HEK293 (cell line): ENCODE measurements at regions of chr5 and their contacts with region 1.

Region 1: GRCh38 chr5:67209142-67209771 is 12.7 kb upstream of the CD180 start:
- H3K4me3 ChIP-seq: no peak overlapping the region
- H3K27ac ChIP-seq: no peak overlapping the region
- H3K4me1 ChIP-seq: no peaks in the 10 kb centered on the region
- CTCF ChIP-seq: peak; percentile 89

Region 2: DNA sequence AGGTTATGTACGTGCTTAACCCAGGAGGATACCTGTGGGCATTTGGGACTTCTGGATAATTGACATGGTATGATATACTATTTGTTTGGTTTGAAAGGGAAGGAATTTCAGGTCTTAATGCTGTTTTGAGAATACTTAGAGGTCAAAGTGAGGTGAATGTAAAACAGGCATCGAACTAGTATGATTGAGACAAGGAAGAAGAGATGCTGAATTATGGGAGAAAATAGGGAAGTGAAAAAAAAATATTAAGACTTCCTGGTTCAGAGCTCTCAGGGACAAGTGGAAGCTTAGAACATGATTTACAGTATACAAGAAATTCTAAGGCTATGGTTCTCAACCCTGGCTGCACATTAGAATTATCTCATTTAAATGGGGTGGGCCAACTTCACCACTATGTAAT is 128.0 kb before region 1 on chr5:
- CTCF ChIA-PET with region 1: no interaction called
- POLR2A ChIA-PET with region 1: no interaction called
- H3K4me3 ChIP-seq: no peak overlapping the region
- H3K27ac ChIP-seq: no peak overlapping the region
- H3K4me1 ChIP-seq: no peaks in the 10 kb centered on the region
- CTCF ChIP-seq: no peak

Region 3: GRCh38 chr5:67156976-67157583 is 52.2 kb before region 1 on chr5:
- CTCF ChIA-PET with region 1: interaction called, 19 read pairs
- POLR2A ChIA-PET with region 1: no interaction called
- H3K4me3 ChIP-seq: no peak overlapping the region
- H3K27ac ChIP-seq: no peak overlapping the region
- H3K4me1 ChIP-seq: no peaks in the 10 kb centered on the region
- CTCF ChIP-seq: peak; percentile 68

Region 4: DNA sequence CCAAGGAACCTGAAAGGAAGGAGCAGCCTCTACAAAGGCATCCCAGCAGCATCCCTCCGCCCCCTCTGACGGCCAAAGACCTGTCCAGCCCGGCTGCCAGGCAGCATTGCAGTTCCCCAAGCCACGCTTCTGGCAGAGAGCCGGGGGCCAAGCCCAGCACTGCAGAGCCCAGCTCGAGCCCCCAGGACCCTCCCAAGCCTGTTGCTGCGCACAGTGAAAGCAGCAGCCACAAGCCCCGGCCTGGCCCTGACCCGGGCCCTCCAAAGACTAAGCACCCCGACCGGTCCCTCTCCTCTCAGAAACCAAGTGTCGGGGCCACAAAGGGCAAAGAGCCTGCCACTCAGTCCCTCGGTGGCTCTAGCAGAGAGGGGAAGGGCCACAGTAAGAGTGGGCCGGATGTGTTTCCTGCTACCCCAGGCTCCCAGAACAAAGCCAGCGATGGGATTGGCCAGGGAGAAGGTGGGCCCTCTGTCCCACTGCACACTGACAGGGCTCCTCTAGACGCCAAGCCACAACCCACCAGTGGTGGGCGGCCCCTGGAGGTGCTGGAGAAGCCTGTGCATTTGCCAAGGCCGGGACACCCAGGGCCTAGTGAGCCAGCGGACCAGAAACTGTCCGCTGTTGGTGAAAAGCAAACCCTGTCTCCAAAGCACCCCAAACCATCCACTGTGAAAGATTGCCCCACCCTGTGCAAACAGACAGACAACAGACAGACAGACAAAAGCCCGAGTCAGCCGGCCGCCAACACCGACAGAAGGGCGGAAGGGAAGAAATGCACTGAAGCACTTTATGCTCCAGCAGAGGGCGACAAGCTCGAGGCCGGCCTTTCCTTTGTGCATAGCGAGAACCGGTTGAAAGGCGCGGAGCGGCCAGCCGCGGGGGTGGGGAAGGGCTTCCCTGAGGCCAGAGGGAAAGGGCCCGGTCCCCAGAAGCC is 43.5 kb before region 1 on chr5:
- CTCF ChIA-PET with region 1: interaction called, 12 read pairs
- POLR2A ChIA-PET with region 1: no interaction called
- H3K4me3 ChIP-seq: no peak overlapping the region
- H3K27ac ChIP-seq: no peak overlapping the region
- H3K4me1 ChIP-seq: no peaks in the 10 kb centered on the region
- CTCF ChIP-seq: no peak